ENCODE measurements at regions of chr4 and their contacts with region 1.

Region 1: DNA sequence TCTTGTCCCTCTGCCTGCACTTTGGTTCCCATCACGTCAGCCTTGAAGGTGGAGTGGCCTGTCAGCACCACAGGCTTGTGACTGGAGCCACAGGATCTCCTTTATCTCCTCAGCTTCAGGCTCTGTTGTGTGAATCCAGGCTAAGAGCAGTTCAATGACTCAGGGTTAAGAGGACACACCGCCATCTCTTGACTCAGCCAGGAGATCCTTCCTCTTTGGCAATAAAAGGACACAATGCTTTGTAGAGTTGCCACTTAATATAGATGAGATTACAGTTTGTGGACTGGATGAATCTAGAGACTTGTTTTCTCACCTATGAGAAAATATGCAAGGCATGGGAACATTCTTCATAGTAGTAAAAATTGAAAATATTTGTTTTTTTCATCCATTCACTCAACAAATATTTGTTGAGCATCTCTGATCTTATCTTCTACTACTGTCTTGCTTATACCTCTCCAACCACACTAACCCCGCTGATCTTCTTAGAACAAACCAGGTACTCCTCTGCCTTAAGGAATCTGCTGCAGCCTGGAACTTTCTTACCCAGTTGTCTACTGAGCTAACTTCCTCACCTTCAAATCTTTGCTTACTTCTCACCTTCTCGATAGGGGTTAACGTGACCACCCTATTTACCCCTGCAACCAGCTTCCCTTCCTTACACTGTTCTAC is 62.3 kb downstream of the UCHL1 start:
- DNase-seq: no peak
- ATAC-seq: no peak
- H3K4me3 ChIP-seq: no peak overlapping the region
- H3K27ac ChIP-seq: no peak overlapping the region
- H3K4me1 ChIP-seq: no peaks in the 10 kb centered on the region
- H3K27me3 ChIP-seq: no peaks in the 10 kb centered on the region
- CTCF ChIP-seq: no peak
- EP300 ChIP-seq: no peak
- POLR2A ChIP-seq: no peak
- RAD21 ChIP-seq: no peak

Region 2: DNA sequence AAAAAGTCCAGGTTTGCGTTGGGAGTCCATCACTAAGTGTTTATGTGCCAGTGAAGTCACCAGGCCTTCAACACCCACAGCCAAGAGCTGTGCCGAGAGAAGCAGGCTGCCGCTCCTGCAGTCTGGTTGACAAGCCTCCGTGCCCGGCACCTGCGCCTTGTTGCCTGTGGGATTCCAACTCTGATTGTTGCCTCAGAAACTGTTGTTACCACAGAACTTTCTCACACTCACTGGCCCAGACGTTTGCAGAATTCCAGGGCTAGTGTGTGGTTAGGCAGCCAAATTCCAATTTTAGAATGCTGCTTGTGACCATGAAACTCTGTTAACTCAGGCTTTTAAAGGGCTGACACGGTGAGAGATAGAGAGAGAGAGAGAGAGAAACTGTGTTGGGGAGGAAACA is 99.4 kb after region 1 on chr4:
- CTCF ChIA-PET with region 1: no interaction called
- POLR2A ChIA-PET with region 1: no interaction called
- RAD21 ChIA-PET with region 1: no interaction called
- SMC1A ChIA-PET with region 1: no interaction called
- in situ Hi-C with region 1: loop called (anchors 25 kb)
- intact Hi-C with region 1: no loop called
- DNase-seq: no peak
- ATAC-seq: no peak
- H3K4me3 ChIP-seq: no peak overlapping the region
- H3K27ac ChIP-seq: no peak overlapping the region
- H3K4me1 ChIP-seq: no peaks in the 10 kb centered on the region
- H3K27me3 ChIP-seq: no peaks in the 10 kb centered on the region
- CTCF ChIP-seq: no peak
- EP300 ChIP-seq: no peak
- POLR2A ChIP-seq: no peak
- RAD21 ChIP-seq: no peak